Panc1 (cell line): ENCODE measurements at regions of chr10 and their contacts with region 1.

Region 1: DNA sequence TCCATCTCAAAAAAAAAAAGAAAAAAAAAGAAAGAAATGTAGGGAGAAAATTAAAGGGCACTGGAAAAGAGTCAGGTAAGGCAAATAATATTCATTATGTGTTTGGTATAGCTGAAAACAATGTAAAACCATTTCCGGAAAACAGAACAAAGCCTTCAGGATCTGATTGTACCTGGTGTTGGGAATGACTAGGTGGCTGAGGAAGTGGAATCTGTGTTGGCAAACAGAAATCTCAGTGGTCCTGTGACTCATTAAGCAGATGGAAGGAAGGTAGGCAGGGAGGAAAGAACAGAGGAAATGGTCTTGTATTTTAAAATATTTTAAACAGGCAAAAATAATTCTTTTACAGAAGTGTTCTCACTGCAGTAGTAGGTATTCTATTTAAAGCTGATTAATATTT is 55.7 kb upstream of the GATA3 start:
- DNase-seq: no peak
- ATAC-seq: no peak
- H3K4me3 ChIP-seq: no peak overlapping the region
- H3K27ac ChIP-seq: no peak overlapping the region
- H3K4me1 ChIP-seq: no peaks in the 10 kb centered on the region
- H3K27me3 ChIP-seq: no peaks in the 10 kb centered on the region
- CTCF ChIP-seq: no peak

Region 2: DNA sequence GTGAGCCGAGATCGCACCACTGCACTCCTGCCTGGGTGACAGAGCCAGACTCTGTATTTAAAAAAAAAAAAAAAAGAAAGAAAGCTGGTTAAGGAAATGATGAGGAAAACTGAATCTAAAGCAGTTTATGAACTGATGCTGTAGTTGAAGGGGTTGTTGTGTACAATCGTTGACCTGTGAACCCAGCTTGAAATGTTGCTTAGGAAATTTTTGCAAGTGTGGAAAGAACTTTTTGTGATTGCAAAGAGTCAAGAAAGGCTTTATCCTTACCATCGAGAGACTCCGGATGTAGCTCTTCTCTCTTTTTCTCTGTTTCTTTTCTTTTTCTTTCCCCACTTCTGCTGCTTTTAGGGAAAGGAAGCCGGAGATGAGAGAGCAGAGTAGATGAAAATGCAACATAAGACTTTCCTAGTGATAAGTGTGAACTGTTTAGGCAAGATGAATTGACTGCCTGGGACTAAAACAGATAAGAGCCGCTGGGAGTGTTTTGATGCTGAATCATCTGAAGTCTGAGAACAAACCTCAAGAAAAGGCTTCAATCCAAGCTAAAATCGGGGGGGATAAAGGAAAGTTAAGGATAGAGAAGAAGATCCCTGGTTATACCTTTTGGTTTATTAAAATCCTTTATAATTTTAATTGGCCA is 111.5 kb before region 1 on chr10:
- CTCF ChIA-PET with region 1: no interaction called
- POLR2A ChIA-PET with region 1: no interaction called
- in situ Hi-C with region 1: no loop called
- intact Hi-C with region 1: no loop called
- DNase-seq: no peak
- ATAC-seq: no peak
- H3K4me3 ChIP-seq: no peak overlapping the region
- H3K27ac ChIP-seq: no peak overlapping the region
- H3K4me1 ChIP-seq: no peaks in the 10 kb centered on the region
- H3K27me3 ChIP-seq: no peaks in the 10 kb centered on the region
- CTCF ChIP-seq: no peak

Region 3: GRCh38 chr10:8026346-8027240 is 27.8 kb after region 1 on chr10:
- CTCF ChIA-PET with region 1: no interaction called
- POLR2A ChIA-PET with region 1: interaction called, 11 read pairs
- in situ Hi-C with region 1: no loop called
- intact Hi-C with region 1: no loop called
- DNase-seq: no peak
- ATAC-seq: peak; percentile 73
- H3K4me3 ChIP-seq: peak overlapping the region; percentile 7 to 45; a peak in 3 of 4 replicates
- H3K27ac ChIP-seq: no peak overlapping the region
- H3K4me1 ChIP-seq: no peaks in the 10 kb centered on the region
- H3K27me3 ChIP-seq: no peaks in the 10 kb centered on the region
- CTCF ChIP-seq: no peak